ENCODE measurements at regions of chr6 and their contacts with region 1.

Region 1: DNA sequence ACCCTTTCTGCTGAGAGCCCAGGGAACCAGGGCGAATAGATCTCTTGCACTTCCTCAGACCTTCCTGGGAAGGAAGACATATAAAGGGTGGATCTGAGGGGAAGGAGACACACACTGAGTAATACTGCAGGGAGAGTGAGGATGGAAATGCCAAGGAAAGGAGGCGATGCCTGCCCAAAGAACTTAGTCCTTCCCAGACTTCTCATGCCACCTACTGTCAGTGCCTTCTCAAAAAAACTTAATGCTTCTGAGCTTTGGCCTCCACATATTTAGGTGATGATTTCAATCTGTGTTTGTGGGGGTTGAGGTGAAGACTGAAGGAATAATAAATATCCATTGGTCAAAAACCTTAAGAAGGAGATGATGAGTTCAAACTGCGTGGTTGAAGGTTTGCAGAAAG is 9.7 kb downstream of the BTN3A1 start:
- DNase-seq: no peak
- H3K4me3 ChIP-seq: no peak overlapping the region
- CTCF ChIP-seq: no peak
- POLR2A ChIP-seq: no peak

Region 2: DNA sequence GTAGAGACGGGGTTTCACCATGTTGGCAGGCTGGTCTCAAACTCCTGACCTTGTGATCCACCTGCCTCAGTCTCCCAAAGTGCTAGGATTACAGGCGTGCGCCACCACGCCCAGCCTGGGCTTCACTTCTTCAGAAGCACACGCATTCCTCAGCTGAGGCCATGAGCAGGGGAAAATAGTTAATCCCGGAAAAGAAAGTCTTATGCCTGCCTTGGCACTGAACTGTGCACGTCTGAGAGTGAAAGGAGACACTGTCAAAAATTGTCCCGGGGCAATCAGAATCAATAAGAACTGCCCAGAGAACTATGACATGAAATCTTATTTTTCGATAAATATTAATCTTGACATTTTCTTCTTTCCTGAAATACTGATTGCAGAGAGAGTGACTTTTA is 26.0 kb before region 1 on chr6:
- intact Hi-C with region 1: loop called (anchors 1 kb)
- DNase-seq: no peak
- H3K4me3 ChIP-seq: no peak overlapping the region
- CTCF ChIP-seq: no peak
- POLR2A ChIP-seq: no peak